ENCODE measurements at regions of chr7 and their contacts with region 1.

Region 1: DNA sequence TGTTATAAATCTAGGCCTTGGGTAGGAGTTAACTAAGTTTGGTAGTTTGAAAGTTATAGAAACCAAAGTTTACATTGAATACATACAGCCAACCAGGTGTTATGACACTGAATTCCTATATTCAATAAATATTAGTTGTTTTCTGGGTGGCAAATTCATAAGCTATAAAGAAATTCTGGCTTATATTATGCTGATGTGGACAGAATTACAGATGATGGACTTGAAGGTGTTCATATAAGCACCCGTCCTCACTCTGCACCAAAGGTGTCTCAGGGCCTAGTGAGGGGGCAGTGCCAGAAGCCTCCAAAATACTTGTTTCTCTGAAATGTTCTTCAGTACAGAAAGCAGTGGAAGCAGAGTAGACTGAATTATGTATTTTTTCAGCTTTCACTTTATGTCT is 973.0 kb downstream of the CNTNAP2 start:
- DNase-seq: no peak
- ATAC-seq: no peak
- H3K4me3 ChIP-seq: no peak overlapping the region
- H3K27ac ChIP-seq: no peak overlapping the region
- H3K4me1 ChIP-seq: no peaks in the 10 kb centered on the region
- H3K27me3 ChIP-seq: no peaks in the 10 kb centered on the region
- CTCF ChIP-seq: no peak
- EP300 ChIP-seq: no peak
- POLR2A ChIP-seq: no peak
- RAD21 ChIP-seq: no peak

Region 2: DNA sequence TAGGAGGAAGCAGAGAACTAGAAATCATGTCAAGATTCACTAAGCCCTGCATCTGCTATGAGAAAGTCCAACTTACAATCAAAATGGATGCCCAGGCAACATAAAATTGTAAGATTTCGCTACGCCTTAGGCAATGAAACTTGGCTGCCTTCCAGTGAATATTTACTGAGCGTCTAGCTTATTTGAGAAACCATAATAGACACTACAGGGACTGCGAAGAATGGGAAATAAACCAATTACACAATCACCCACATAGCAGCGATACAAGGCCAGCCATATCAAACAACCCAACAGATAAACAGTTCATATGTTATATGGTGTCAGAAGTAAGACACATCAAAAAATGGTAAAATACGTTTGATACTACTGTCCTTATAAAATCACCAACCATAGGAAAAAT is 955.9 kb after region 1 on chr7:
- CTCF ChIA-PET with region 1: no interaction called
- POLR2A ChIA-PET with region 1: no interaction called
- in situ Hi-C with region 1: no loop called
- intact Hi-C with region 1: loop called (anchors 5 kb)
- DNase-seq: no peak
- ATAC-seq: no peak
- H3K4me3 ChIP-seq: no peak overlapping the region
- H3K27ac ChIP-seq: no peak overlapping the region
- H3K4me1 ChIP-seq: no peaks in the 10 kb centered on the region
- H3K27me3 ChIP-seq: peaks cover 0 to 3% of the 10 kb centered on the region in 2 experiments; a peak in 1 of 5 replicates
- CTCF ChIP-seq: no peak
- EP300 ChIP-seq: no peak
- POLR2A ChIP-seq: no peak
- RAD21 ChIP-seq: no peak